ENCODE measurements at regions of chr10 and their contacts with region 1.

Region 1: GRCh38 chr10:24642622-24643417 is 80.9 kb downstream of the ARHGAP21 start:
- DNase-seq: no peak
- H3K4me3 ChIP-seq: no peak overlapping the region
- H3K27ac ChIP-seq: peak overlapping the region; percentile 23 to 59 (median 46)
- H3K4me1 ChIP-seq: peaks cover 5 to 23% (median 8%) of the 10 kb centered on the region in 4 donors
- H3K27me3 ChIP-seq: no peaks in the 10 kb centered on the region
- CTCF ChIP-seq: peak; percentile 65 to 88 (median 74)
- EP300 ChIP-seq: no peak
- POLR2A ChIP-seq: no peak

Region 2: DNA sequence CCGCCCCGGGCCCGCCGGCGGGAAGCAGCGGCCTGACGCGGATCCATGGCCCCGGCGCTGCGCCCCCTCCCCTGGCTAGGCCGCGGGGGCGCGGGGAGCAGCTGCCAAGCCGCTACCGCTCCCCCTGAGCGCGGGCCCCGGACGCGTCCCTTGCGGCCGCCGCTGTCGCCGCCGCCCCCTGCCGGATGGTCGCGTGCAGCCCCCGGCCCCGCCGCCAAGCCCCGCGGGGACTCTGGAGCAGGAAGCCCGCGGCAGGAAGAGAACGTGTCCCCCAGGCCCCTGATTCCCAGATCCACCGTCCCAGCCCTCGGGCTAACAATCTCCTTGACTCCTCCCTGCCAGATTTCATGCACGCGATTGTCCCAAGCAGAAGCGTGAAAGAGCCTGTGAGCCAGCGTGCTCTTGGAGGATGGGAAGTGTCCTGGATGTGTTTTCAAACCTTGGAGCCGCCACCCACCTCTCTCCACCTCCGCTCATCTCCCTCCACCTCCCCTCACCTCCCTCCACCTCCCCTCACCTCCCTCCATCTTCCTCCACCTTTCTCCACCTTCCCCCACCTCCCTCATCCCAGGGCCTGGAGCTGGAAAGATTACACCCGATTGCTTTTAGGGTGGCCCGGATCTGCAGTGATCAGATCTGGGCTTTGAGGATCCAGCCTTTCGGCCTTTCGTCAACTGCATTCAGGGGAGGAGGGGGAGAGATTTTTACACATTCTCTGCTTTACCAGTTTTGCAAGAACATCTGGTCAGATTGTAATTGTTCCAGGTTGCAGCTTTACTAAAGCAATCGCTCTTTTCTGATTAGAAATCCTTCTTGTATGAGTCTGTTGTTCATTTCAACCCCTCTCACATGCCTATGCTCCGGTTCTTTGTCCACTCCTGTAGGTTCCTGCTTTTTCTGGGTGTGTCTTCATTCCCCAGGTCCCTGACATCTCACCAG is 310.2 kb after region 1 on chr10:
- in situ Hi-C with region 1: loop called in 1 of 4 experiments (anchors 25 kb)
- intact Hi-C with region 1: no loop called
- DNase-seq: peak; percentile 48
- H3K4me3 ChIP-seq: peak overlapping the region; percentile 48 to 77 (median 60)
- H3K27ac ChIP-seq: peak overlapping the region; percentile 80 to 85 (median 84)
- H3K4me1 ChIP-seq: peaks cover 0 to 21% (median 16%) of the 10 kb centered on the region in 4 donors
- H3K27me3 ChIP-seq: no peaks in the 10 kb centered on the region
- CTCF ChIP-seq: peak in 2 of 5 experiments; percentile 15 to 32
- EP300 ChIP-seq: no peak
- POLR2A ChIP-seq: no peak

Region 3: GRCh38 chr10:24974976-24975375 is 332.2 kb after region 1 on chr10:
- in situ Hi-C with region 1: loop called (anchors 25 kb)
- intact Hi-C with region 1: no loop called
- DNase-seq: no peak
- H3K4me3 ChIP-seq: no peak overlapping the region
- H3K27ac ChIP-seq: no peak overlapping the region
- H3K4me1 ChIP-seq: no peaks in the 10 kb centered on the region
- H3K27me3 ChIP-seq: no peaks in the 10 kb centered on the region
- CTCF ChIP-seq: no peak
- EP300 ChIP-seq: no peak
- POLR2A ChIP-seq: no peak

Region 4: DNA sequence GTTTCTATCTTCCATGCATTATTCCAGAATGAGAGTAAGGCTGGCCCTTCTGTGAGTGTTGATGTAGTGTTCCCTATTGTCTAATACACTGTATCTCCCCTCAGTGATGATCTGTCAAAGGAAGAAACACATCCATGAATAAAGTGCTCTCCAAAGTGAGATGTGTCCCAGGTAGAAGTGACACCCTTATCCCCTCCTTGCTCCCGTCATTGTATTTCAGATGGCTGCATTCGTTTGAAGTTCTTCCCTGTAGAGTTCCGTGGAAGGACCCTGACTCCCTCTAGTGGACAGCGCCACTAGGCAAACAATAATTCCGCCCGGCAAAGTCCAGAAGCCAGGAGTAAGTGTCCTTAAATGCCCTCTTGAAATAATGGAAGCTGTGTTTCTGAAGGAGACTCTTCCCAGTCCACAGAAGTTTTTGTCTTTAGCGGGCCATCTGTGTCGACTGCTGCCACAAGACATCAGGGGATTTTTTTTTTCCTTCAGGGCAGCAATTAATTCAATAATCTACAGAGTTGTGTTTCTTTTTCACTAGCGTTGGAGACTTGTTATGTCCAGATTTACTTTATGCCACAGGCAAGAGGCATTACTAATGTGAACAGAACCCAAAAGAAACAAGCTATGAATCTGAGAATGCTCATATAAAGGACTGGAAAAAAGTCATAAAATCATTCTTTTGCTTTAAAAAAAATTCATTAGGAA is 438.2 kb after region 1 on chr10:
- in situ Hi-C with region 1: loop called (anchors 10 to 25 kb)
- intact Hi-C with region 1: no loop called
- DNase-seq: peak; percentile 89
- H3K4me3 ChIP-seq: no peak overlapping the region
- H3K27ac ChIP-seq: peak overlapping the region in 1 of 4 donors; percentile 35
- H3K4me1 ChIP-seq: peaks cover 0 to 29% (median 9%) of the 10 kb centered on the region in 4 donors
- H3K27me3 ChIP-seq: no peaks in the 10 kb centered on the region
- CTCF ChIP-seq: peak; percentile 89 to 92 (median 90)
- EP300 ChIP-seq: no peak
- POLR2A ChIP-seq: no peak

Measured in transverse colon (tissue), 4 donors.